Calu3 (cell line): ENCODE measurements at regions of chr6 and their contacts with region 1.

Region 1: DNA sequence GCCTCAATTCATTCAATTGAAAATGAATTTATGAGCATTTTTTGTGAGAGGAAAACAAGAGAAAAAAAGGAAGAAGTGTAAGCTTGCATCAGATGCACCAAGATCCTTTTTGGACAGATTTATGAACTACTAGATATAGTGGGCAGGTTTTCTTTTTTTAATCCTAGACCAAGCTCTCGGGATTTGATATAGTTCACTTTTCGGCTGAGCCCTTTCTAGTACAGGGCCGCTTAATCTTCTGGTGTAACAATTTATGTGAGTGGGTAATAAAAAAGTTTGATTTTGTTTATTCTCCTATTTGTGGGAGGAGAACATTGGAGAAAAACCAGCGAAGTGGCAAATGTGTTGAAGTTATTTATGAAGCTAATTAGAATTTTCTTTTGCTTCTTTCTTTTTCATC is 538.0 kb downstream of the UTRN start:
- DNase-seq: no peak
- H3K4me3 Mint-ChIP-seq: no peak overlapping the region
- H3K27ac Mint-ChIP-seq: no peak overlapping the region
- H3K4me1 Mint-ChIP-seq: no peaks in the 10 kb centered on the region
- H3K27me3 Mint-ChIP-seq: no peaks in the 10 kb centered on the region
- CTCF ChIP-seq: no peak

Region 2: GRCh38 chr6:144653885-144654505 is 169.1 kb before region 1 on chr6:
- CTCF ChIA-PET with region 1: no interaction called
- intact Hi-C with region 1: loop called (anchors 2 kb)
- DNase-seq: no peak
- H3K4me3 Mint-ChIP-seq: peak overlapping the region; percentile 1
- H3K27ac Mint-ChIP-seq: no peak overlapping the region
- H3K4me1 Mint-ChIP-seq: peaks cover 49% of the 10 kb centered on the region
- H3K27me3 Mint-ChIP-seq: no peaks in the 10 kb centered on the region
- CTCF ChIP-seq: no peak

Region 3: DNA sequence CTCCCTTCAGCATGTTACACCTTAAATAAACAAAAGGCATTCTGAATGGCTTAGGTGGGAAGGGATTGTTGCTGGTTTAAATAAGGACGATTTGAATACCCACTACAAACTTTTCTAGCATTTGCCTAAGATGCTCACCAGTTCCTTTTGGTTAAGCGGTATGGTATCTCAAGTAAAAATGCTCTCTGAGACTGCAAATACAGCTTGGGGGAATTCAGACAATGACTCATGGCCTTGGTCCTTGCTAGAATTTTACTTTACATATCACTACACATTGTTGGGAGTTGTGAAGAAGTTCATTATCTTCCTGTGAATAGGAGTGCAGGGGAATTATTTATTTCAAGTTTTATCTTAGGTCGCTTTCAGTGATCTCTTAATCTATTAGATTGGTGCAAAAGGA is 132.7 kb after region 1 on chr6:
- CTCF ChIA-PET with region 1: no interaction called
- intact Hi-C with region 1: no loop called
- DNase-seq: no peak
- H3K4me3 Mint-ChIP-seq: no peak overlapping the region
- H3K27ac Mint-ChIP-seq: no peak overlapping the region
- H3K4me1 Mint-ChIP-seq: peaks cover 11% of the 10 kb centered on the region
- H3K27me3 Mint-ChIP-seq: no peaks in the 10 kb centered on the region
- CTCF ChIP-seq: no peak